AG04449 (cell line): ENCODE measurements at regions of chr1 and their contacts with region 1.

Region 1: GRCh38 chr1:33327587-33328315 is 6.9 kb upstream of the A3GALT2 start:
- DNase-seq: peak; percentile 96
- H3K4me3 ChIP-seq: no peak overlapping the region
- CTCF ChIP-seq: no peak

Region 2: DNA sequence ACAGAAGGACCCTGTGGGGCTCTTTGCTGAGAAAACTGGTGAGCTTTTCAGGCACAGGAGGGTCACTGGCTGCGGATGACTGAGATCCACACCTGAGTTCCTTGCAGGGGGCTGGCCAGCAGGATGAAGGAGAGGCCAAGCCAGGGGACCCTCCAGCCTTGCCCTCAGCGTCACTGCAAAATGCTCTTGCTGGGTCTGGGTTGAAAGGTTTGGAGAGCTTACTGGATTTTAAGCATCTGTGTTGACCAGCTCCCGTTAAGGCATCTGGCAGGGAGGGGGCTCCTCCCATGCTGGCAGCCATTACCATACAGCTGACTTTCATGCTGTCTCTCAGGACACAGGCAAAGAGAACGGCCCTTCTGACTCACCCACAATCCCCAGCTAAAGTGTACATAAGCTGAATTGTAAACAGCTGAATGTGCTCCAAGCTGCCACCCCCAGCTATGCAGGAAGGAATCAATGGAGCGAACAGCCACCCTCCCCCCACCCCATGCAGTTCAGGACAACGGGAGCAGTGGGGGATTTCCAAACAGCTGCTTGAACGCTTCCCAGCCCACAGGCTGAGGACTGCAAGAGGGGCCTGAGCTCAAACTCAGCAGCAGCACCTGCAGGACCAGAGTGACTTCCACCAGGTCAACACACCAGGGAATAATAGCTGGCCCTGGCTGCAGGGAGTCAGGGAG is 14.4 kb after region 1 on chr1:
- CTCF ChIA-PET with region 1: interaction called, 13 read pairs
- POLR2A ChIA-PET with region 1: interaction called, 7 read pairs
- DNase-seq: peak; percentile 91
- H3K4me3 ChIP-seq: peak overlapping the region; percentile 9; the same call in 1 of the 2 replicates
- CTCF ChIP-seq: no peak